H1 (cell line): ENCODE measurements at regions of chr20 and their contacts with region 1.

Region 1: DNA sequence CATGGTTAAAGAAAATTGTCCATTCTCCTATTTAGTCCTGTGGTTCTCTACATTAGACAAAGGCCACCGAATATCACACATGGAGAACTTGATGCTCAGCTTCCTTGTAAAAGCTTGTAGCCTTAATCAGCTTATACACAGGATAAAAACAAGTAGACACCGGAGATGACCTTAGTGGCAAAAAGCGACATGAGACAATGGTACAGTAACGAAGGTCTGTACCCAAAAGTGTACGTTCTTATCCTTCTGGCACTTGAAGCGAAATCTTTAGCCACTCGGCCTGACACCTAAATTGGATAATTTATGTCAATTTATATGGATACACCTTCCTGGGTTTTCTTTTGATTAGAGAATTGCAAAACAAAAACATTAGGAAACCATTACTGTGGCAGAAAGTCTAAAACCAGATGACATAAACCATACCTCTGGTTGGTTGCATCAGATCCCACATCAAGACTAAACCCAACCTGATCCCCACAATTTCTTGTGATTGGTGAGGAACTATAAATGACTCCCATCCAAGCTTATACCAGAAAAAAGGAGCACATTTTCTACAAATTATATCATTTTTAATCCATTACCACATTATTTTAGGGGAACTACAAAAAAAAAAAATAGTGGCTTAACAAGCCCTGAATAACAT is 6.1 kb downstream of the RBM39 start:
- DNase-seq: no peak
- H3K4me3 ChIP-seq: no peak overlapping the region
- H3K27ac ChIP-seq: no peak overlapping the region
- H3K4me1 ChIP-seq: peaks cover 0 to 4% (median 0%) of the 10 kb centered on the region in 4 experiments; a peak in 2 of 7 replicates
- H3K27me3 ChIP-seq: no peaks in the 10 kb centered on the region
- CTCF ChIP-seq: no peak
- EP300 ChIP-seq: no peak
- POLR2A ChIP-seq: peak in 1 of 2 experiments; percentile 29; a peak in 1 of 3 replicates
- RAD21 ChIP-seq: no peak

Region 2: DNA sequence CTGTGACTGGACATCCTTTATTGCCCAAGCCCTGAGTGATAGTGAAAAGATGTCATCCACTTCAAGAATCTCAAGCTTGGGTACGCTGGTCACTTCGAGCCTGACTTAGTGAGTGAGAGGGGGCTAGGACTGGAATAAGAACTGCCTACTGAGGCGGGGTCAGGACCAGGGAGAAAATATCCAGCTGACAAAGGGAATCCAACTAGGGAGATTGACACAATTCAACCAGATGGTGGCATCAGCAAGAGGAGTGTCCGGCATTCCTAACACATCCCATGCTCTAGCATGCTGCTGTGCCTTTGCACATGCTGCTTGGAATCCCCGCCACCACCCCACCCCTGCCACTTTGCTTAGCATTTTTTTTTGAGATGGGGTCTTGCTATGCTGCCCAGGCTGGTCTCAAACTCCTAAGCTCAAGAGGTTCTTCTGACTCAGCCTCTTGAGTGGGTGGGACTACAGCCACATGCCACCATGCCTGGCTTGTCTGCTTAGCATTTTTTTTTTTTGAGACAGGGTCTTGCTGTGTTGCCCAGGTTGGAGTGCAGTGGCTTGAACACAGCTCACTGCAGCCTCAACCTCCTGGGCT is 287.1 kb before region 1 on chr20:
- CTCF ChIA-PET with region 1: no interaction called
- POLR2A ChIA-PET with region 1: no interaction called
- DNase-seq: no peak
- H3K4me3 ChIP-seq: no peak overlapping the region
- H3K27ac ChIP-seq: no peak overlapping the region
- H3K4me1 ChIP-seq: peaks cover 0 to 3% (median 0%) of the 10 kb centered on the region in 4 experiments; a peak in 2 of 7 replicates
- H3K27me3 ChIP-seq: no peaks in the 10 kb centered on the region
- CTCF ChIP-seq: no peak
- EP300 ChIP-seq: no peak
- POLR2A ChIP-seq: no peak
- RAD21 ChIP-seq: no peak

Region 3: GRCh38 chr20:35757098-35757705 is 21.3 kb after region 1 on chr20:
- CTCF ChIA-PET with region 1: no interaction called
- POLR2A ChIA-PET with region 1: interaction called, 2,341 read pairs
- DNase-seq: no peak
- H3K4me3 ChIP-seq: no peak overlapping the region
- H3K27ac ChIP-seq: no peak overlapping the region
- H3K4me1 ChIP-seq: no peaks in the 10 kb centered on the region
- H3K27me3 ChIP-seq: no peaks in the 10 kb centered on the region
- CTCF ChIP-seq: no peak
- EP300 ChIP-seq: no peak
- POLR2A ChIP-seq: no peak
- RAD21 ChIP-seq: no peak

Region 4: GRCh38 chr20:35837577-35838198 is 101.7 kb after region 1 on chr20:
- CTCF ChIA-PET with region 1: interaction called, 3 read pairs
- POLR2A ChIA-PET with region 1: interaction called, 12 read pairs
- DNase-seq: no peak
- H3K4me3 ChIP-seq: no peak overlapping the region
- H3K27ac ChIP-seq: no peak overlapping the region
- H3K4me1 ChIP-seq: peaks cover 0 to 4% (median 0%) of the 10 kb centered on the region in 4 experiments; a peak in 1 of 7 replicates
- H3K27me3 ChIP-seq: no peaks in the 10 kb centered on the region
- CTCF ChIP-seq: no peak
- EP300 ChIP-seq: no peak
- POLR2A ChIP-seq: no peak
- RAD21 ChIP-seq: no peak